Right lobe of liver (tissue), 6 donors: ENCODE measurements at regions of chr4 and their contacts with region 1.

Region 1: GRCh38 chr4:122758033-122758432 is 25.5 kb downstream of the BBS12 start:
- DNase-seq: no peak
- ATAC-seq: peak; percentile 64 to 80 (median 76)
- H3K4me3 ChIP-seq: no peak overlapping the region
- H3K27ac ChIP-seq: no peak overlapping the region
- H3K4me1 ChIP-seq: peaks cover 0 to 5% (median 2%) of the 10 kb centered on the region in 4 donors
- H3K27me3 ChIP-seq: no peaks in the 10 kb centered on the region
- CTCF ChIP-seq: peak; percentile 68 to 80 (median 77)
- POLR2A ChIP-seq: no peak

Region 2: GRCh38 chr4:122922877-122923511 is 165.0 kb after region 1 on chr4:
- intact Hi-C with region 1: loop called in 1 of 2 experiments (anchors 10 kb)
- DNase-seq: peak; percentile 82 to 89 (median 87)
- ATAC-seq: peak; percentile 91 to 97 (median 95)
- H3K4me3 ChIP-seq: peak overlapping the region; percentile 85 to 92 (median 87)
- H3K27ac ChIP-seq: peak overlapping the region in 2 of 3 donors; percentile 62 to 70
- H3K4me1 ChIP-seq: peaks cover 0 to 21% (median 4%) of the 10 kb centered on the region in 4 donors
- H3K27me3 ChIP-seq: no peaks in the 10 kb centered on the region
- CTCF ChIP-seq: no peak
- POLR2A ChIP-seq: no peak

Region 3: DNA sequence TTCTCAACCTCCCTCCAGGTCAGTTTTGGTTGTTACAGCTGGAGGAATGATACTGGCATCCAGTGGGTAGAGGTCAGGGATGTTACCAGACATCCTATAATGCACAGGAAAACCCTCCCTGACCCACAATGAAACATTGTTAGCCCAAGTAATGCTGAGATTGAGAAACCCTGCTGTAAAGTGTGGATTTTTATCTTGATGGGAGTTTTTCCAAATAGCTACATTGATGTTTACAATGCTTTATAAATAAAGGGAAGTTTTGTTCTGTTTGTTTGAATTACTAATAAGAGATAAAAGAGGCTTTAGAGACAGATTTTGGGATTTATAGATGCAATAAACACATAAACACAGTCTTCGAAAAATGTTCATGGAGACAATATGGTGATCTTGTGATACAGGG is 358.4 kb after region 1 on chr4:
- intact Hi-C with region 1: no loop called
- DNase-seq: no peak
- ATAC-seq: no peak
- H3K4me3 ChIP-seq: no peak overlapping the region
- H3K27ac ChIP-seq: no peak overlapping the region
- H3K4me1 ChIP-seq: no peaks in the 10 kb centered on the region
- H3K27me3 ChIP-seq: no peaks in the 10 kb centered on the region
- CTCF ChIP-seq: no peak
- POLR2A ChIP-seq: no peak